H1 (cell line): ENCODE measurements at regions of chr17 and their contacts with region 1.

Region 1: DNA sequence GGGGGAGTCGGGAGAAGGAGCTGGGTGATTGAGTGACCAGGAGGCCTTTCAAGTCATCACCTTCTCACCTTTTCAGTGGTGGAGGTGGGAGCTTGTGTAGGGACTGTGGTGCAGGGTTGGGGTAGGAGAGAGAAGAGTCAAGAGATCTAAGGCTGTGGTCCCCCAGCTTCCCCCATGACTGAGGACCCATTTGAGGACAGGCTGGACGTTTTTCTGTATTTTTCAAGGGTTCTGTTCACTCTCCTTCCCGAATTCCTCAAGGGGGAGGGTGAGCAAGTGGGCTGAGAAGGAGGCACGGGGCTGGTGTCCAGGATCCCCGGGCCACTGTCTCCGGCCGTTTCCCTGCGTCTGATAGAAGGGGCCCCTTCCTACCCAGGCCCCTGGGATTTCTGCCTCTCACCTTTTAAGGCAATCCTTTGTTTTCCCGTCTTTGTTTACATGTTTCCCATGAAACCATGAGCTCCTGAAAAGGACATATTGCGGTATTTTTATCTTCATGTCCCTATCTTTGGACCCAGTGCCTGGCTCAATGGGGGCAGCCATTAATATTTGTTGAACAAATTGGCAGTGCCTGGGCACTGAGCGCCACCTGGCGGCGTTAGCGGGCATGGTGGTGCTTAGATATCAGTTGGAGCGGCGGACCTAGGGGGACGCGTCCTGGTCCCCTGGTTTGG is 9.2 kb upstream of the CD300A start:
- DNase-seq: peak in 1 of 2 experiments; percentile 88
- H3K4me3 ChIP-seq: no peak overlapping the region
- H3K27ac ChIP-seq: no peak overlapping the region
- H3K4me1 ChIP-seq: peaks cover 3 to 31% (median 25%) of the 10 kb centered on the region in 4 experiments
- H3K27me3 ChIP-seq: peaks cover 0 to 14% (median 11%) of the 10 kb centered on the region in 4 experiments; a peak in 6 of 7 replicates
- CTCF ChIP-seq: peak; percentile 86 to 97 (median 86)
- EP300 ChIP-seq: no peak
- POLR2A ChIP-seq: no peak
- RAD21 ChIP-seq: peak; percentile 98 to 99

Region 2: GRCh38 chr17:74372426-74372825 is 84.9 kb before region 1 on chr17:
- CTCF ChIA-PET with region 1: no interaction called
- POLR2A ChIA-PET with region 1: no interaction called
- DNase-seq: no peak
- H3K4me3 ChIP-seq: no peak overlapping the region
- H3K27ac ChIP-seq: no peak overlapping the region
- H3K4me1 ChIP-seq: peaks cover 0 to 12% (median 7%) of the 10 kb centered on the region in 4 experiments; a peak in 6 of 7 replicates
- H3K27me3 ChIP-seq: peaks cover 0 to 1% (median 0%) of the 10 kb centered on the region in 4 experiments; a peak in 4 of 7 replicates
- CTCF ChIP-seq: no peak
- EP300 ChIP-seq: no peak
- POLR2A ChIP-seq: no peak
- RAD21 ChIP-seq: no peak

Region 3: DNA sequence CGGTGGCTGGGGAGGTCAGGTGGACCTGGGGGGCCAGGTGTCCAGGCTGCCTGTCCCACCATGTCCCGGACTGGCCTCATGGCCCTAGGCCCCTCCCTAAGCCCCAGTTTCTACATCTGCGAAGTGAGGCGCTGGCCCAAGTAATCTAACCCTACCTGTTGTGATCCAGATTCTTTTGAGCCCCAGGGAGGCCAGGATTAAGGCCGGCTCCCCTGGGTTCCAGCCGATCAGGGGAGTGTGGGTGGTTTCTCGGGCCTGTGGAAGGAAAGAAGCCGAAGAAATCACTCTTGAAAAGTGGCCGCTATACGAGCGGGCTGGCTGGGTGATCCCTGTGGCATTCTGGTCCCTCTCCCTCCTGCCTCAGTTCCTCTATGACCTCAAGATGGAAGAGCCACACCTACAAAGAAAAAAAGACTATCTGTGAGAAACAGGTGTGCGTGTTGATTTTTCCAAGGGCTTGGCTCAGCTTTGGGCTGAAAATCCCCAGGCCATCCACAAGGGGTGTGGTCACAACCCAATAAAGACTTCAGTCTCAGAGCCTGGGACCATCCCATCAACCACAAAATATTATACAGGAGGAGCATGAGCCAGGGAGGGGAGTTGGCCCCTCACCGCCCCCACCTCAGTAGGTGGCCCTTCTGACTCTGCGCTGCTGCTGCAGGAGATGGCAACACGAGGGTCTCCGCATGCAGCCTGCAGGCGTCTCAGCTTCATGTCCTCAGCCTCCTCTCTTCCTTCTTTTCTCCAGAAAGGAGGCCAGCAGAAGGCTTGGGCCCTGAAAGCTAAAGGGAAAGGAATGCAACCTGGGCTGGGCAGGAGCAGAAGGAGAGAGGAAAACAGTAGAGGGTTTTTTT is 69.7 kb before region 1 on chr17:
- CTCF ChIA-PET with region 1: interaction called, 39 read pairs
- POLR2A ChIA-PET with region 1: interaction called, 3 read pairs
- DNase-seq: no peak
- H3K4me3 ChIP-seq: peak overlapping the region in 2 of 4 experiments; percentile 6 to 11; a peak in 1 of 8 replicates
- H3K27ac ChIP-seq: no peak overlapping the region
- H3K4me1 ChIP-seq: peaks cover 5 to 20% (median 12%) of the 10 kb centered on the region in 4 experiments
- H3K27me3 ChIP-seq: no peaks in the 10 kb centered on the region; a peak in 1 of 7 replicates
- CTCF ChIP-seq: peak; percentile 14 to 39 (median 27); a peak in 3 of 4 replicates
- EP300 ChIP-seq: no peak
- POLR2A ChIP-seq: no peak
- RAD21 ChIP-seq: peak; percentile 11 to 12; a peak in 2 of 4 replicates

Region 4: GRCh38 chr17:74408262-74408661 is 49.0 kb before region 1 on chr17:
- CTCF ChIA-PET with region 1: interaction called, 47 read pairs
- POLR2A ChIA-PET with region 1: interaction called, 3 read pairs
- DNase-seq: no peak
- H3K4me3 ChIP-seq: no peak overlapping the region
- H3K27ac ChIP-seq: no peak overlapping the region
- H3K4me1 ChIP-seq: peaks cover 3 to 23% (median 14%) of the 10 kb centered on the region in 4 experiments
- H3K27me3 ChIP-seq: no peaks in the 10 kb centered on the region
- CTCF ChIP-seq: peak; percentile 14 to 27 (median 15); a peak in 3 of 4 replicates
- EP300 ChIP-seq: no peak
- POLR2A ChIP-seq: no peak
- RAD21 ChIP-seq: peak; percentile 27 to 52; a peak in 3 of 4 replicates

Region 5: GRCh38 chr17:74437702-74438101 is 19.6 kb before region 1 on chr17:
- CTCF ChIA-PET with region 1: interaction called, 93 read pairs
- POLR2A ChIA-PET with region 1: interaction called, 22 read pairs
- DNase-seq: no peak
- H3K4me3 ChIP-seq: no peak overlapping the region
- H3K27ac ChIP-seq: no peak overlapping the region
- H3K4me1 ChIP-seq: peaks cover 5 to 16% (median 12%) of the 10 kb centered on the region in 4 experiments
- H3K27me3 ChIP-seq: peaks cover 0 to 7% (median 3%) of the 10 kb centered on the region in 4 experiments; a peak in 3 of 7 replicates
- CTCF ChIP-seq: peak; percentile 73 to 97 (median 88)
- EP300 ChIP-seq: no peak
- POLR2A ChIP-seq: no peak
- RAD21 ChIP-seq: peak; percentile 96

Region 6: DNA sequence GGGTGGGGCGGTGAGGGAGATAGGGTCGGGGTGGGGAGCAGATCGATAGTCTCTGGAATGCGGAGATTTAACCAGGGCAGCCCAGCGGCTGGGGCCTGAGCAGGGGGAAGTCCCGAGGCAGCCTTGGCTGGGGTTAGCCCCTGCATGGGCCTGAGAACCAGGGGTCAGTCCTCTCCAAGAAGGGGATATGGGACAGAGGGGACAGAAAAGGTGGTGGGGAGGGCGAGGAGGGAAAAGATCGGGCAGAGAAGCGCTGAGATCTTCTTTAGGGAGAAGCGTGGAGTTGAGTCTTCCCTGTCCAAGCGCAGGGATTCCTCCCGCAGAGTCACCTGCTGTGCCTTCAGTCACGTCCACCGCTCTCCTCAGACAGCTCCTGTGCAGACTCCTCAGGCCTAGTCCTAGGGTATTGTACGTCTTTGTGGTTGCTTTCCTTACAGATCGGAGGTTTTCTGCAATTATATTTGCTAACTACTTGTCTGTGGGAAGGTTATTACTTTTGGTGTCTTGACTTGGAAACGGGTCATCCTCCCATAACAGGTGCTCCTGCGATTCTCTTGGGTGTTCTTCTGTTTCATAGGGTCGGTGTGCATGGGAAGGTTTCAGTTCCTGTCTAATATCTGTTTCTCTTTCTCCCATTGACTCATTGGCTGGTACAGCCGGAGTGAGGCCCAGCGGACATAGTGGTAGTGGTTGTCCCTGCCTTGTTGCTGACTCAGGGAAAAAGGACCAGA is 10.1 kb after region 1 on chr17:
- CTCF ChIA-PET with region 1: interaction called, 14 read pairs
- POLR2A ChIA-PET with region 1: no interaction called
- DNase-seq: no peak
- H3K4me3 ChIP-seq: peak overlapping the region; percentile 27 to 68 (median 39); a peak in 7 of 8 replicates
- H3K27ac ChIP-seq: no peak overlapping the region
- H3K4me1 ChIP-seq: peaks cover 0 to 9% (median 2%) of the 10 kb centered on the region in 4 experiments; a peak in 2 of 7 replicates
- H3K27me3 ChIP-seq: peaks cover 3 to 25% (median 22%) of the 10 kb centered on the region in 4 experiments
- CTCF ChIP-seq: no peak
- EP300 ChIP-seq: no peak
- POLR2A ChIP-seq: no peak
- RAD21 ChIP-seq: no peak

Region 7: DNA sequence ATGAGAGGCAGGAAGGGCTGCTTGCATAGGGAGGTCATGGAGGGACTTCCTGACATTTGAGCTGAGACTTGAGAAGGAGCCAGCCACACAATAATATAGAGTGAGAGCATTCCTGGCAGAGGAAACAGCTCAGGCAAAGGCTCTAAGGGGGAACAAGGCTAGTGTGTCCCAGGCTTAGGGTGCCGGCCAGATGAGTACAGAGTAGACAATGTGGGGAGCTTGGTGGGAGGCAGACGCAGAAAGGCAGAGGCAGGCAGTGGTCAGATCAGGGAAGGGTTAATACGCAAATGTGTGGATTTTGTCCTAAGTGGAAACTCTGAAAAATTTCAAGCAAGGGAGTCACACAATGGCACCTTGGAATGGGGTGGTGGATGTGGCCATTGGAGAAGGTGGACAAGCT is 42.7 kb after region 1 on chr17:
- CTCF ChIA-PET with region 1: interaction called, 11 read pairs
- POLR2A ChIA-PET with region 1: no interaction called
- DNase-seq: no peak
- H3K4me3 ChIP-seq: no peak overlapping the region
- H3K27ac ChIP-seq: no peak overlapping the region
- H3K4me1 ChIP-seq: no peaks in the 10 kb centered on the region
- H3K27me3 ChIP-seq: no peaks in the 10 kb centered on the region
- CTCF ChIP-seq: no peak
- EP300 ChIP-seq: no peak
- POLR2A ChIP-seq: no peak
- RAD21 ChIP-seq: no peak

Region 8: GRCh38 chr17:74592087-74592990 is 135.1 kb after region 1 on chr17 and contains the start of gene CD300LD:
- CTCF ChIA-PET with region 1: no interaction called
- POLR2A ChIA-PET with region 1: no interaction called
- DNase-seq: no peak
- H3K4me3 ChIP-seq: no peak within 1 kb of the TSS
- H3K27ac ChIP-seq: no peak within 1 kb of the TSS
- H3K4me1 ChIP-seq: no peaks in the 10 kb centered on the region
- H3K27me3 ChIP-seq: peaks cover 0 to 2% (median under 1%) of the 10 kb centered on the region in 4 experiments; a peak in 4 of 7 replicates
- CTCF ChIP-seq: no peak
- EP300 ChIP-seq: no peak
- POLR2A ChIP-seq: no peak
- RAD21 ChIP-seq: no peak
- total RNA-seq, gene CD300LD: not detected in 2 replicates